HCT116 (cell line): ENCODE measurements at regions of chr1 and their contacts with region 1.

Region 1: GRCh38 chr1:203273206-203273868 is 32.0 kb upstream of the BTG2 start:
- DNase-seq: peak; percentile 71
- ATAC-seq: peak; percentile 85
- H3K4me3 ChIP-seq: peak overlapping the region; percentile 15 to 45; a peak in 3 of 4 replicates
- H3K27ac ChIP-seq: no peak overlapping the region; the same call in 1 of the 2 replicates
- H3K4me1 ChIP-seq: peaks cover 0 to 29% of the 10 kb centered on the region in 2 experiments; a peak in 2 of 4 replicates
- H3K27me3 ChIP-seq: no peaks in the 10 kb centered on the region
- CTCF ChIP-seq: peak; percentile 93 to 98 (median 98)
- POLR2A ChIP-seq: no peak
- RAD21 ChIP-seq: peak; percentile 100

Region 2: GRCh38 chr1:202987922-202988583 is 285.3 kb before region 1 on chr1:
- CTCF ChIA-PET with region 1: no interaction called
- POLR2A ChIA-PET with region 1: no interaction called
- RAD21 ChIA-PET with region 1: no interaction called
- intact Hi-C with region 1: no loop called
- DNase-seq: no peak
- ATAC-seq: no peak
- H3K4me3 ChIP-seq: no peak overlapping the region
- H3K27ac ChIP-seq: no peak overlapping the region
- H3K4me1 ChIP-seq: peaks cover 0 to 2% of the 10 kb centered on the region in 2 experiments; a peak in 2 of 4 replicates
- H3K27me3 ChIP-seq: no peaks in the 10 kb centered on the region
- CTCF ChIP-seq: no peak
- POLR2A ChIP-seq: no peak
- RAD21 ChIP-seq: no peak

Region 3: GRCh38 chr1:203038891-203039608 is 234.3 kb before region 1 on chr1:
- CTCF ChIA-PET with region 1: interaction called, 185 read pairs
- POLR2A ChIA-PET with region 1: interaction called, 5 read pairs
- RAD21 ChIA-PET with region 1: interaction called, 8 to 16 read pairs
- intact Hi-C with region 1: loop called (anchors 1 kb)
- DNase-seq: no peak
- ATAC-seq: peak; percentile 92
- H3K4me3 ChIP-seq: no peak overlapping the region
- H3K27ac ChIP-seq: no peak overlapping the region
- H3K4me1 ChIP-seq: peaks cover 0 to 22% of the 10 kb centered on the region in 2 experiments; a peak in 2 of 4 replicates
- H3K27me3 ChIP-seq: no peaks in the 10 kb centered on the region
- CTCF ChIP-seq: peak; percentile 83 to 97 (median 92)
- POLR2A ChIP-seq: no peak
- RAD21 ChIP-seq: peak; percentile 89

Region 4: DNA sequence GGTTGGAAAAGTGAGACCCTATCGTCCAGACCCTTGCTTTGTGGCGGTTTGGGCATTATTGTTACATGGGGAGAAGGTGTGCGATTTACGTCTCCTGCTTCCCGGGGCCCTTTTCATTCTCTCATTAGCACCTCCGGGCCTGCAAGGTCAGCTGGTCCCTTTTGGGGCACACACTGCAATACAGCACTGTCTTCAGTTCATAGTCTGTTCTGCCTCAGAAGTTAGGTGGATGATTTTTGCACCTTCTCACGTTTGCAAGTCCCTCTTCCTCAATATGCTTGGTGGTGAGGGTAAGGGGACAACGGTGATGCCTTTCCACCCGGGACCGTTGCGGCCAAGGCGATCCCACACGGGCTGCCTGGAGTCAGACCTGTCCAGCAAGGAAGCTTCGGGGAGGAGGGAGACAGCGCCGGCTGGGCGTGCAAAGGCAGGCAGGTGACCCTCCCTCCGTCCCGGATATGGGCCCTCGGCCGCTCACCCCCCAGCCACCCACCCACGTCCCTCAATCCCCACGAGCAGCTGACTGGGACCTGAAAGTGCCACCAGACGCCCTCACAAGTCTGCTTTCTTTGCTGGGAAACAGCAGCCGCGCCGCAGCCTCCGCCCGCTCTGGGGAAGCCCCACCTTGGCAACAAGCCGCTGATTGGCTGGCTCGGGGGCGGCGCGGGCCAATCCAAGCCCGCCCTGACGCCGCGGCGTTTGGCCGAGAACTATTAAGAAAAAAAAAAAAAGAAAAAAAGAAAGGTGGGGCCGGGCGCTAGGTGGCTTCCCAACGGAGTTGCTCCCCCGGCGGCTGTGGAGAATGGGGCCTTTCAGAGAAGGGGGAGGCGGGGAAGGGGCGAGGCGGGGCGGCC is 53.7 kb after region 1 on chr1:
- CTCF ChIA-PET with region 1: interaction called, 19 read pairs
- POLR2A ChIA-PET with region 1: interaction called, 6 read pairs
- RAD21 ChIA-PET with region 1: interaction called, 4 to 5 read pairs
- intact Hi-C with region 1: no loop called
- DNase-seq: peak; percentile 75
- ATAC-seq: peak; percentile 93
- H3K4me3 ChIP-seq: peak overlapping the region; percentile 58 to 68
- H3K27ac ChIP-seq: peak overlapping the region; percentile 79
- H3K4me1 ChIP-seq: peaks cover 11 to 18% of the 10 kb centered on the region in 2 experiments; a peak in 3 of 4 replicates
- H3K27me3 ChIP-seq: peaks cover 9% of the 10 kb centered on the region; the same call in 1 of the 2 replicates
- CTCF ChIP-seq: no peak
- POLR2A ChIP-seq: no peak
- RAD21 ChIP-seq: no peak

Region 5: DNA sequence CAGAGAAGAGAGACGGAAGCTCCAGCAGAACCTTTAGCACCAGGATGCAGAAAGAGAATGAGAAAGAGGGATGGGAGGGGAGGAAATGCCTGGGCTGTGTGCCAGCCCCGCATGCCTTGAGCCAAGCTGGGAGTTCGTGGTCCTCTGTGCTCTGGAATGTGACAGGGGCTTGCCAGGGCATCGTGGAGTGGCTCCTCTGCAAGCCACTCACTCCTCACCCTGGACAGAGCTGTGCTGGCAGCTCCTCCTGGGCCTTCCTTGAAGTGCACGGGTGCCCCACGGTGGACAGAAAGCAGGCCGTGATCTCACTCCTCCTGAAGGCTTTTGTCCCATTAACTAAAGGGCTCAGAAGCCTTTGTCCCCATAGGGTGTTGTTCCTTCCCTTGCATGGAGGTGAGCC is 167.4 kb after region 1 on chr1:
- CTCF ChIA-PET with region 1: interaction called, 15 read pairs
- POLR2A ChIA-PET with region 1: no interaction called
- RAD21 ChIA-PET with region 1: interaction called, 3 read pairs
- intact Hi-C with region 1: no loop called
- DNase-seq: no peak
- ATAC-seq: peak; percentile 84
- H3K4me3 ChIP-seq: no peak overlapping the region
- H3K27ac ChIP-seq: no peak overlapping the region
- H3K4me1 ChIP-seq: no peaks in the 10 kb centered on the region
- H3K27me3 ChIP-seq: peaks cover 24% of the 10 kb centered on the region
- CTCF ChIP-seq: peak; percentile 14 to 59 (median 26); a peak in 3 of 6 replicates
- POLR2A ChIP-seq: no peak
- RAD21 ChIP-seq: peak; percentile 64

Region 6: DNA sequence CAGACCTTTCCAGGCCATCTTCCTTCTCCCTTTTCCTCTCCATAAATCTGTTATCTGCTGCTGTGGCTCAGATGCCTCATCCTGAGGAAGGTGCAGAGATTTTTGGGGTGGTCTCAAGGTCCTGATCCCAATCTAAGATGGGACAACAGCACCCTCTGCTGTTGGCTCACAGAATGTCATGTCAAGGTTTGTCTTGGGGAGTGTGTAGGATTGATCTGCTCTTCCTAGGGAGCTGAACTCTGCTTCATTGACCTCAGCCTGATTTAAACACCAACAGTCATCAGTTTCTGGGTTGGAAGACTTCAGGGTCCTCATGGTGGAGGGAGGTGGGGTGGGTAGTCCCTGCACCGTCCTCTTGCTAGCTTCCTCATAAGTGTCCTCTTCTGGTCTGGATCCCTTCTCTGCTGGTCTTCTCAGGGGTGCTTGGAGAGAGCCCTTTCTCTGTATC is 428.8 kb after region 1 on chr1:
- CTCF ChIA-PET with region 1: interaction called, 4 read pairs
- POLR2A ChIA-PET with region 1: no interaction called
- RAD21 ChIA-PET with region 1: no interaction called
- intact Hi-C with region 1: loop called (anchors 2 kb)
- DNase-seq: peak; percentile 35
- ATAC-seq: peak; percentile 82
- H3K4me3 ChIP-seq: no peak overlapping the region
- H3K27ac ChIP-seq: no peak overlapping the region
- H3K4me1 ChIP-seq: peaks cover 0 to 19% of the 10 kb centered on the region in 2 experiments; a peak in 1 of 4 replicates
- H3K27me3 ChIP-seq: no peaks in the 10 kb centered on the region
- CTCF ChIP-seq: peak; percentile 75 to 98 (median 91)
- POLR2A ChIP-seq: no peak
- RAD21 ChIP-seq: peak; percentile 98

Region 7: GRCh38 chr1:204232526-204232925 is 959.2 kb after region 1 on chr1:
- CTCF ChIA-PET with region 1: no interaction called
- POLR2A ChIA-PET with region 1: no interaction called
- RAD21 ChIA-PET with region 1: no interaction called
- intact Hi-C with region 1: no loop called
- DNase-seq: no peak
- ATAC-seq: no peak
- H3K4me3 ChIP-seq: no peak overlapping the region
- H3K27ac ChIP-seq: no peak overlapping the region
- H3K4me1 ChIP-seq: no peaks in the 10 kb centered on the region
- H3K27me3 ChIP-seq: no peaks in the 10 kb centered on the region
- CTCF ChIP-seq: no peak
- POLR2A ChIP-seq: no peak
- RAD21 ChIP-seq: no peak